CD14-positive monocyte (primary cell): ENCODE measurements at regions of chr2 and their contacts with region 1.

Region 1: GRCh38 chr2:174634130-174635014 is 36.8 kb upstream of the WIPF1 start:
- DNase-seq: peak; percentile 66 to 74 (median 70)
- H3K4me3 ChIP-seq: peak overlapping the region; percentile 78 to 99 (median 80)
- H3K4me3 Mint-ChIP-seq: peak overlapping the region; percentile 90 to 100
- H3K27ac ChIP-seq: peak overlapping the region; percentile 88 to 94
- H3K27ac Mint-ChIP-seq: peak overlapping the region; percentile 90 to 98 (median 96)
- H3K4me1 ChIP-seq: peaks cover 44 to 47% of the 10 kb centered on the region in 2 donors
- H3K4me1 Mint-ChIP-seq: peaks cover 49% of the 10 kb centered on the region
- H3K27me3 ChIP-seq: no peaks in the 10 kb centered on the region
- H3K27me3 Mint-ChIP-seq: peaks cover 0 to 2% (median 0%) of the 10 kb centered on the region in 3 donors
- CTCF ChIP-seq: no peak

Region 2: GRCh38 chr2:174682578-174683391 is 48.4 kb after region 1 on chr2:
- intact Hi-C with region 1: loop called (anchors 5 to 10 kb)
- DNase-seq: peak in 1 of 3 donors; percentile 11
- H3K4me3 ChIP-seq: peak overlapping the region; percentile 50 to 88 (median 74)
- H3K4me3 Mint-ChIP-seq: peak overlapping the region; percentile 91 to 94
- H3K27ac ChIP-seq: peak overlapping the region in 1 of 2 donors; percentile 46
- H3K27ac Mint-ChIP-seq: peak overlapping the region in 4 of 7 donors; percentile 61 to 73 (median 67)
- H3K4me1 ChIP-seq: peaks cover 20 to 35% of the 10 kb centered on the region in 2 donors
- H3K4me1 Mint-ChIP-seq: peaks cover 40% of the 10 kb centered on the region
- H3K27me3 ChIP-seq: no peaks in the 10 kb centered on the region
- H3K27me3 Mint-ChIP-seq: peaks cover 10 to 17% (median 14%) of the 10 kb centered on the region in 3 donors
- CTCF ChIP-seq: no peak

Region 3: GRCh38 chr2:174824068-174824467 is 189.7 kb after region 1 on chr2:
- intact Hi-C with region 1: no loop called
- DNase-seq: no peak
- H3K4me3 ChIP-seq: no peak overlapping the region
- H3K4me3 Mint-ChIP-seq: no peak overlapping the region
- H3K27ac ChIP-seq: no peak overlapping the region
- H3K27ac Mint-ChIP-seq: no peak overlapping the region
- H3K4me1 ChIP-seq: no peaks in the 10 kb centered on the region
- H3K4me1 Mint-ChIP-seq: no peaks in the 10 kb centered on the region
- H3K27me3 ChIP-seq: no peaks in the 10 kb centered on the region
- H3K27me3 Mint-ChIP-seq: peaks cover 2 to 8% (median 3%) of the 10 kb centered on the region in 3 donors
- CTCF ChIP-seq: no peak